Mammary epithelial cell (primary cell): ENCODE measurements at regions of chr1 and their contacts with region 1.

Region 1: GRCh38 chr1:52686830-52687229 is 11.3 kb downstream of the COA7 start:
- DNase-seq: no peak
- H3K4me3 ChIP-seq: no peak overlapping the region
- H3K27ac ChIP-seq: no peak overlapping the region
- H3K4me1 ChIP-seq: no peaks in the 10 kb centered on the region
- H3K27me3 ChIP-seq: no peaks in the 10 kb centered on the region
- CTCF ChIP-seq: no peak

Region 2: GRCh38 chr1:52127181-52128180 is 559.3 kb before region 1 on chr1:
- CTCF ChIA-PET with region 1: no interaction called
- dilution Hi-C with region 1: no loop called
- in situ Hi-C with region 1: no loop called
- intact Hi-C with region 1: loop called (anchors 5 kb)
- DNase-seq: peak; percentile 54
- H3K4me3 ChIP-seq: no peak overlapping the region
- H3K27ac ChIP-seq: no peak overlapping the region
- H3K4me1 ChIP-seq: peaks cover 5% of the 10 kb centered on the region
- H3K27me3 ChIP-seq: no peaks in the 10 kb centered on the region
- CTCF ChIP-seq: peak; percentile 77 to 86

Region 3: DNA sequence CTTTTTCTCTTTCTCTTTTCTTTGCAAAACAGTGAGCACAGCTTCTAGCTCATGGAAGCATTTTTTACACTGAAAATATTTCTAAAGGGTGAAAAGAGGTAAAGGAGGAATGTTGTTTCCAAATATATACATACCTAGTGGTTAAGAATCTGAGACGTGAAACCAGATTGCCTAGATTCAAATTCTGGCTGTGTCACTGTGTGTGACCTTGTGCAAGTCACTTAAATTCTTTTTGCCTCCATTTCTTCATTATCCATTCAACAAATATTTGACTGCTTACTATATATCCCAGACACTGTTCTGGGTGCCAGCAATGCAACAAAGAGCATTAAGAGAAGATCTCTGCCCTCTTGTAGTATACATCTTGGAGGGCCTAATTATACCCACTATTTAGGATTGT is 491.7 kb before region 1 on chr1:
- CTCF ChIA-PET with region 1: no interaction called
- dilution Hi-C with region 1: no loop called
- in situ Hi-C with region 1: no loop called
- intact Hi-C with region 1: no loop called
- DNase-seq: no peak
- H3K4me3 ChIP-seq: no peak overlapping the region
- H3K27ac ChIP-seq: no peak overlapping the region
- H3K4me1 ChIP-seq: peaks cover 18% of the 10 kb centered on the region
- H3K27me3 ChIP-seq: no peaks in the 10 kb centered on the region
- CTCF ChIP-seq: no peak

Region 4: DNA sequence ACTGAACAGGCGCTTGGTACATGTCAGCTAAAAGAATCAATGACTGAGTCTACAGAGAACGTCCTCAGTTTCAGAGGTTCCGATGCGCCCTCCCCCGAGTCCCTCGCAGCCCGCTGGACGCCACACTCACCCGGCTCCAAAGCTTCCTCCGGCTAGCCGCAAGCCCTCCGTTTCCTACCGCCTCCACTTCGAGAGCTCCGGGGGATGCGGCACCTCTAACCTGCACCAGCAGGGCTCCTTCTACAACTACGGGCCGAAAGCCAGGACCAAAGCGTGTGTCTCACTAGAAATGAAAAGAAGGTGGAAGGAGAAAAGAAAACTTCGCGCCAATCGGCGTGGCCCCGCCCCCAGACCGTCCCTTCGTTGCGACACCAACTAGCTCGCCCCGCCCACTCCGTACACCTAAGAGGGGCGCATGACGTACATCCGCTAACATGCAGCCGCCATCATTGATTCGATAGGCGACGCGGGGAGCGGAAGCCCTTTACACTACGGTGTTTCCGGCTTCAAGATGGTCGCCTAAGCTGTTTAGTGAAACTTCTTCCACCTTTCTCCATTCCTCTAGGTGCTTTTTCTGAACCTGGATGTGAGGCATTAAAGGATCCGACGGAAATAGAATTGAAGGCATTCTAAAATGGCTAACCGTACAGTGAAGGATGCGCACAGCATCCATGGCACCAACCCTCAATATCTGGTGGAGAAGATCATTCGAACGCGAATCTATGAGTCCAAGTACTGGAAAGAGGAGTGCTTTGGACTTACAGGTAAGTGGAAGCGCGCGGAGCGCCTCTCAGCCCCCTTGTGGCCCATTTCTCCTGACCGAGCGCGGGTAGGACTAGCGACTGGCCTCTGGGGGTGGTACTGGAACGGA is 282.5 kb before region 1 on chr1 and contains the starts of genes ORC1 and PRPF38A:
- CTCF ChIA-PET with region 1: no interaction called
- dilution Hi-C with region 1: no loop called
- in situ Hi-C with region 1: loop called in 1 of 2 experiments (anchors 25 kb)
- intact Hi-C with region 1: loop called (anchors 1 kb)
- DNase-seq: peak; percentile 94
- H3K4me3 ChIP-seq: peak within 1 kb of the TSS; percentile 75 to 87 (median 76)
- H3K27ac ChIP-seq: peak within 1 kb of the TSS; percentile 94
- H3K4me1 ChIP-seq: peaks cover 6% of the 10 kb centered on the region
- H3K27me3 ChIP-seq: no peaks in the 10 kb centered on the region
- CTCF ChIP-seq: peak; percentile 57 to 74
- total RNA-seq, gene ORC1: 1.2 to 8.8 TPM
- total RNA-seq, gene PRPF38A: 9.2 to 34.9 TPM

Region 5: GRCh38 chr1:52487632-52488031 is 199.2 kb before region 1 on chr1:
- CTCF ChIA-PET with region 1: no interaction called
- dilution Hi-C with region 1: no loop called
- in situ Hi-C with region 1: no loop called
- intact Hi-C with region 1: loop called (anchors 2 kb)
- DNase-seq: no peak
- H3K4me3 ChIP-seq: no peak overlapping the region
- H3K27ac ChIP-seq: no peak overlapping the region
- H3K4me1 ChIP-seq: peaks cover 2% of the 10 kb centered on the region
- H3K27me3 ChIP-seq: no peaks in the 10 kb centered on the region
- CTCF ChIP-seq: no peak

Region 6: DNA sequence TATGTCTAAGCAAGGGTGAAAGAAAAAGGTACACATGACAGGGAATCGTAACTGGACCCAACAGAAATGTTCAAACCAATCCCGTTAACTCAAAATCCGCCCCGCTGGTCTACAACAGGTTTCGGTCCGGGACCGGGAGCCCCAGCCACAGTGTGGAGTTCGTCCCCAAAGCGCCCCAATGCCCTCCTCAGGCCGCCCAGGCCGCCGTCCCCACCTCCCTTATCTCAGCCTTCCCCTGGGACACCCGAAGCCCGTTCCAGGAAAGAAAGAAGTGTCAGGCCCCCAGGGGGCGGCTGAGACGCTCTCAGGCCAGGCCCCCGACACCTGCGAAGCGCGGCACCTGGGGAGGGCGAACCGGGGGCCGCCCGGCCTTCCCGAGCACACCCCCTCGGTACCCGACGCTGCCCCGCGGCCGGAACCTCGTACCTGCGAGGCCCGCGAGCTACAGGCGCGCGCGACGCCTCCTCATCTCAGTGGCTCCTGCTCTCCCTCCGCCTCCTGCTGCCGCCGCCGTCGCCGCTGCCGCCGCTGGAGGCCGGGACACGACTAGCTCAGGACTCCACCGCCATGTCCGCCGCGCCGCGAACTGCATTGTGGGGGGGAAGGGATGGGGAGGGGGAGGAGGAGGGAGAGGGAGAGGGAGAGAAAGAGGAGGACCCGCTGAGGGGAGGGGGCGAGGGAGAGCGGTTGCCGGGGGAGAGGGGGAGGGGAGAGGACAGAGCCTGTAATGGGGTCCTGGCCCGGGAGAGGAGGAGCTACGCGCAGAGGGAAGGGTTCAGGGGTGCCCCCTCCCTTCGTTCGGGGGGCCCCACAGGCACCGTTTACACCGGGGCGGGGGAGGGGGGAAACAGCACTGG is 134.1 kb before region 1 on chr1 and contains the start of gene TUT4:
- CTCF ChIA-PET with region 1: no interaction called
- dilution Hi-C with region 1: no loop called
- in situ Hi-C with region 1: no loop called
- intact Hi-C with region 1: loop called (anchors 1 kb)
- DNase-seq: peak; percentile 74
- H3K4me3 ChIP-seq: peak within 1 kb of the TSS; percentile 84 to 95 (median 89)
- H3K27ac ChIP-seq: peak within 1 kb of the TSS; percentile 95
- H3K4me1 ChIP-seq: peaks cover 24% of the 10 kb centered on the region
- H3K27me3 ChIP-seq: no peaks in the 10 kb centered on the region
- CTCF ChIP-seq: peak in 1 of 2 donors; percentile 9
- total RNA-seq, gene TUT4: 30.5 to 47.9 TPM

Region 7: DNA sequence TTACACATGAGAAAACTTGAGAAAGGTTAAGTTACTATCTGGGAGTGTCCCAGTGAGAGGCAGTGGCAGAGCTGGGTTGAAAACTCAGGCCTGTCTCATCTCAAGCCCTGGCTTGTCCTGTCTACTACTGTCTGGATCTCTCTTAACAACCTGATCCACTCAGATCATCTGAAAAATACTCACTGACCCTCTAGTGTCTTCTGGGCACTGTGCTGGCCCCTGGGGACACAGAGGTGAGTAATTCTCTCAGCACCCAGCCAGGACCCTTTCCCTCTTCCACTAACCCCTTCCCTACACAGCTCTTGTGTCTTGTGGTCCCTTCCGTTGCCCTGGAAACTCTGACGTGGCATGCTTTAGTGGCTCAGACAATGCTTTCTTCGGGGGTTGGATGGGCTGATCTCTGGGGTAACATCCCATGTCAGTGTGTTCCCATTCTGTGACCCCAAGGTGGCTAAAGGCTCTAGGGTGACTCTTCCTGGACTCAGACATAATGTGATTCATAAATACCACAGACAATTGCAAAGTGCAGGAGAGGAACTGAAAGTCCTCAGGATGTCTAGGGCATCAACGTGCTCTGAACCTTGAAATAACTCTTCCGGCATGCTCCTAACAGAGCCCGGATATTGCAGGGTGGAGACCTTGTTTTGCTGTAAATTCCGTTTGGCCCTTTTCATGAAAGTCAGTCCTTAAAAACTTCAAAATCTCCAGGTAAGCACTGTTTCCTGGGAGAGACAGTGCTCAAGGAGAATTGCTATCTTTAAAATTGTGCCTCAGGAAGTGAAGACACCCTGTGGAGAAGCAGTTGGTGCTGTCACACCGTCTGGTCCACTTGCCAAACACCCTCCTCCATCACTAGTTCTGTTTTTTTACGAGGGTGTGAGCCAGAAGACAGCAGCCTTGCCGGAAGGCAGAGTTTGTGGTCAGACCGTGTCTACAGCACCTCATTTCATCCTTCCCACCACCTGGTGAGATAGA is 49.8 kb before region 1 on chr1:
- CTCF ChIA-PET with region 1: no interaction called
- dilution Hi-C with region 1: no loop called
- in situ Hi-C with region 1: no loop called
- intact Hi-C with region 1: no loop called
- DNase-seq: peak; percentile 59
- H3K4me3 ChIP-seq: no peak overlapping the region
- H3K27ac ChIP-seq: peak overlapping the region; percentile 2
- H3K4me1 ChIP-seq: peaks cover 22% of the 10 kb centered on the region
- H3K27me3 ChIP-seq: peaks cover 6% of the 10 kb centered on the region
- CTCF ChIP-seq: no peak